OCI-LY7 (cell line): ENCODE measurements at regions of chr3 and their contacts with region 1.

Region 1: DNA sequence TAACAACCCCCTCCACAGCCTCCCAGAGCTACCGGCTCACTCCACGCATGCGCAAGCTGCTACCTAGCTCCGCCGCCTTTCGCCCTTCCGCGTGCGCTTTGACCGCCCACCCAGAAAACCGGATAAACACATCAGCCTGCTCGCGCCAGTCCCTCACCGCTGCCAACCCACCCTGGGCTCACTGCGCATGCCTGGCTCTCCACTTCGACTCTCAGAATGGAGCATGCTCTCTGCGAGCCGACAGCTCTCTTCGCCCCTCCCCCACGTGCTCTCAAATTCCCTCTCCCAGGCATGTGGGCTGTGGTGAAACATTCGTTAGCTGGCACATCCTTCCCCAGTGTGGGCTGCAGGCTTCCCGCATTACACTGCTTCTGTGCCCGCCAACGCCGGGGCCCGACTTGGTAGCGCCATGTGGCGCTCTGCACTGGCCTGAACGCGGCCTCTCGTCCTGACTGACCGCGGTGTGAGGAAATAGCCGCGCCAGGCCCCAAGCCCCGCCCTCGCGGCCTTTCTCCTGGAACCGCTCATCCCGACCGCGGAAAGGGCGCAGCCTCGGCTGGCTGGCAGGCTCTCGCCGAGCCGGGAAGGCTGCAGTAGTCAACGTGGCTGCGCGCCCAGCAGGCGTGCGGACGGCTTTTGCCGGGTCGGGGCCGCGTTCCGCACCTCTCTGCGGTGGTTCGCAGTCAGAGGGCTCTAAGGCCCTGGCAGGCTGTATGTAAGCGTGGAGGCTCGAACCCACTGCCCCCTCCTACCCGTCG is 445 bp upstream of the MSL2 start:
- DNase-seq: peak; percentile 100
- H3K4me3 ChIP-seq: peak overlapping the region; percentile 91
- H3K27ac ChIP-seq: peak overlapping the region; percentile 91
- H3K4me1 ChIP-seq: peaks cover 18% of the 10 kb centered on the region
- CTCF ChIP-seq: no peak

Region 2: GRCh38 chr3:136134091-136134490 is 62.5 kb before region 1 on chr3:
- CTCF ChIA-PET with region 1: no interaction called
- POLR2A ChIA-PET with region 1: interaction called, 11 read pairs
- intact Hi-C with region 1: no loop called
- DNase-seq: no peak
- H3K4me3 ChIP-seq: no peak overlapping the region
- H3K27ac ChIP-seq: no peak overlapping the region
- H3K4me1 ChIP-seq: no peaks in the 10 kb centered on the region
- CTCF ChIP-seq: no peak

Region 3: DNA sequence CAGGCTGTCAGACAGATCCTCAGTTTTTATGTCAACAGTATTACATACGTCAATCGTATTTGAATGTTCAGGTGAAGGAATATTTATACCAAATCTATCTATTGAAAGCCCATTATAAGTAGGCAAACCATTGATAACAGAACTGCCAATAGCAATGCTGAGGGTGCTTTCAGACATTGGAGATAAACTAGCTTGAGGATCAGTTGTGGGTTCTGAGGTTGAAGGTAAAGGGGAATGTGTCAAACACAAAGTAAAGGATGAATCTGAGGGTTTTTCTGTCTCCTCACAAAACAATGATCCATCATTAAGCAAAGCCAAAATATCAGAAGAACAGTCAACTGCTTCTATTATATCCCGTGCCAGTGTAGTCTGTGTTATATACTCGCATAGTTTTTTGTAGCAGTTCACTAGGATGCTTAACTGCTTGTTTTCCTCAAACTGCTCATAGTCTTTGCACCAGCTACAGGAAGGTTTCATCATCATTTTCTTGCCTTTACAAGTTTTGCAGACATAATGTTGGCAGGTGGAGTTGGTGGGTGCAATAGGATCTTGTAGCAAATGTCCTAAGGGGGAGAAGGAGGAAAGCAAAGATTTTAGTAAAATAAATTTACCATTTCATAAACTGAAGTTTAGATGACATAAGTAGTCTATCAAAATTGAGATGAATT is 44.3 kb before region 1 on chr3:
- CTCF ChIA-PET with region 1: interaction called, 15 read pairs
- POLR2A ChIA-PET with region 1: interaction called, 3 read pairs
- intact Hi-C with region 1: no loop called
- DNase-seq: no peak
- H3K4me3 ChIP-seq: no peak overlapping the region
- H3K27ac ChIP-seq: no peak overlapping the region
- H3K4me1 ChIP-seq: peaks cover 6% of the 10 kb centered on the region
- CTCF ChIP-seq: no peak

Region 4: DNA sequence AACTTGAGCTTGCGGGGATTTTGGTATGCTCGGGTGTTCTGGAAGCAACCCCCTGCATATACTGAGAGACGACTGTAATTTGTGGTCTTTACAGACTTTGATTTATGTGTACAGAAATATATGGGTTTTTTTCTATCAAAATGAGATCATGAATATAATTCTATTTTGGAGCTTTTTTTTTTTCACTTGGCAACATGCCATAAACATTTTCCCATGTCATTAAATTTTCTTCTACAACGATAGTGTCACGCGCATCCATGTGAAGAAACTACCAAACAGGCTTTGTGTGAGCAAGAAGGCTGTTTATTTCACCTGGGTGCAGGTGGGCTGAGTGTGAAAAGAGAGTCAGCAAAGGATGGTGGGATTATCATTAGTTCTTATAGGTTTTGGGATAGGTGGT is 20.6 kb after region 1 on chr3:
- CTCF ChIA-PET with region 1: no interaction called
- POLR2A ChIA-PET with region 1: no interaction called
- intact Hi-C with region 1: no loop called
- DNase-seq: no peak
- H3K4me3 ChIP-seq: no peak overlapping the region
- H3K27ac ChIP-seq: no peak overlapping the region
- H3K4me1 ChIP-seq: no peaks in the 10 kb centered on the region
- CTCF ChIP-seq: no peak

Region 5: GRCh38 chr3:136250226-136250902 is 53.8 kb after region 1 on chr3 and contains the start of gene PCCB:
- CTCF ChIA-PET with region 1: interaction called, 7 read pairs
- POLR2A ChIA-PET with region 1: interaction called, 73 read pairs
- intact Hi-C with region 1: loop called (anchors 1 kb)
- DNase-seq: peak; percentile 96
- H3K4me3 ChIP-seq: peak within 1 kb of the TSS; percentile 71
- H3K27ac ChIP-seq: peak within 1 kb of the TSS; percentile 83
- H3K4me1 ChIP-seq: peaks cover 61% of the 10 kb centered on the region
- CTCF ChIP-seq: peak; percentile 78
- total RNA-seq, gene PCCB: 38.3 and 39.7 TPM in 2 replicates

Region 6: DNA sequence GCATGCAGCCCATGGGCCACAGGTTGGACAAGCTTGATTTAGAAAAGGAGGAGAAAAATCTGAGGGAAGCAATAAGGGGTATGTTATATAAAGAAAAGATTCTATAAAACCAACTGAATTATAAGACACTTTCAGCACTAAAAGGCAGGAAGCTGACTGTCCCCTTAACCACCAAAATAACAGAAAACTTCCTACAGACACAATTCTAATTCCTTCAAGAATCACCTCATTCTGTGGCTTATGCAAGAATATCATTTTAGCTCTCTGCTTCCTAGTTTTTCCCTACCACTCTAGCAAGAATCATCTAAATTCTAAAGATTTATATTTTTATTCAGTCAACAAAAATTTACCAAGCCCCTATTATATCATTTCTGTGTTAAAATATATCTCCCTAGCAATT is 549.3 kb after region 1 on chr3:
- CTCF ChIA-PET with region 1: no interaction called
- POLR2A ChIA-PET with region 1: interaction called, 12 read pairs
- intact Hi-C with region 1: no loop called
- DNase-seq: no peak
- H3K4me3 ChIP-seq: no peak overlapping the region
- H3K27ac ChIP-seq: no peak overlapping the region
- H3K4me1 ChIP-seq: peaks cover 62% of the 10 kb centered on the region
- CTCF ChIP-seq: no peak

Region 7: GRCh38 chr3:136861890-136862616 is 665.5 kb after region 1 on chr3 and contains the start of gene NCK1:
- CTCF ChIA-PET with region 1: no interaction called
- POLR2A ChIA-PET with region 1: interaction called, 6 read pairs
- intact Hi-C with region 1: loop called (anchors 1 kb)
- DNase-seq: peak; percentile 98
- H3K4me3 ChIP-seq: peak within 1 kb of the TSS; percentile 84
- H3K27ac ChIP-seq: peak within 1 kb of the TSS; percentile 91
- H3K4me1 ChIP-seq: peaks cover 43% of the 10 kb centered on the region
- CTCF ChIP-seq: peak; percentile 63
- total RNA-seq, gene NCK1: 24.9 and 35.2 TPM in 2 replicates